ENCODE measurements at regions of chr6 and their contacts with region 1.

Region 1: DNA sequence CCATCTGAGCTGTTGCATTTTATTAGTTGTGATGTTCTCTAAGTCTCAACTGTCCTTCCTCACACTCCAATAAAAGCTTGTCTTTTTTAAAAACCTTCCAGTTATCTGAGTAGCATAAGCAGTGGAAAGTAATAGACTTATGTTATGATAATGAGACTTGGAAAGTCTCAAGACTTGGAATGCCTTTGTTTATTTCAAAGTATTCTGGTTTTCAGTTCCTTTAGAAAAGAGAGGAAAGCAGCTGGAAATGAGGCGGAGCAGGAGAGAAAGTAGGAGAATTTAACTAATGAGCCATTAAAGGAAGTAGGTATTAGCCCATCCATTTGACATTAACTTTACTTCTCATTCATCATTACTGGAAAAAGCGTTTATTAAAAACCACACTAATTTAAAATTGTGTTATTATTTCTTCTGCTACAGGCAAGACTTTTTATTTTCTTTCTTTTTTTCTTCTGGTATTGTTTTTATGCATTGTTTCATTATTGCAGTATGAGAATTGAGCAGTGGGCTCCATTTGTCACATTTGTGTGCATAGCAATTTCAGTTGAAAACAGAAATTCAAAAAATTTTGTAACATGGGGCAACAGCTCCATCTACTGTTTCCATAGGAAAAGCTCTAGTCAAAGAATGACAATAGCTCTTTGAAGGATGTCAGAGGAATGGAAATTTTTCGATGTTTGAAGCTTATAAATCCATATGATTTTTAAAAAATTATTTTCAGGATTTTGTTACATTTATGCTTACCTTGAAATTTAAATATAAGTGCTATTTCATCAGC is 194.8 kb downstream of the COL9A1 start:
- DNase-seq: peak; percentile 28
- H3K4me3 ChIP-seq: no peak overlapping the region; a peak in 1 of 4 replicates
- H3K27ac ChIP-seq: no peak overlapping the region
- H3K4me1 ChIP-seq: peaks cover 0 to 5% of the 10 kb centered on the region in 2 experiments; a peak in 1 of 4 replicates
- H3K27me3 ChIP-seq: no peaks in the 10 kb centered on the region
- CTCF ChIP-seq: peak; percentile 86
- EP300 ChIP-seq: no peak
- RAD21 ChIP-seq: peak; percentile 93

Region 2: DNA sequence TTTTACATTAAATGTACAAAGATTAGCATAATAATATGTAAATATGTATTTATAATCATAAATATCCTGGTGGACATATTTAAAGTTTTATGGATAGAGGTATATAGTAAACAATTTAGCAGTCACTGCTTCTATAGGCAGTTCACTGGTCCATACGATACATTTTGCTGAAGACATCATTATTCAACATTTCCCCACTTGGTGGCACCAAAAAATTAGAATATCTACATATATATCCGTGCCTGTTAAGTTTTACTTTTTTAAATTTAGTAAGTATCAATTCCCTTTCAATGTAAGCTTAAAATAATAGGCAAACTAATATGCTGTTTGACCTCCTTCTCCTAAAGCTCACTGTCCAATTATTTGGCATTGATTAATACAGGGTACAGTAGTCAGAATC is 375.4 kb before region 1 on chr6:
- CTCF ChIA-PET with region 1: interaction called, 43 read pairs
- POLR2A ChIA-PET with region 1: no interaction called
- DNase-seq: no peak
- H3K4me3 ChIP-seq: no peak overlapping the region
- H3K27ac ChIP-seq: no peak overlapping the region
- H3K4me1 ChIP-seq: no peaks in the 10 kb centered on the region
- H3K27me3 ChIP-seq: no peaks in the 10 kb centered on the region
- CTCF ChIP-seq: peak; percentile 50
- EP300 ChIP-seq: no peak
- RAD21 ChIP-seq: peak; percentile 56

Region 3: DNA sequence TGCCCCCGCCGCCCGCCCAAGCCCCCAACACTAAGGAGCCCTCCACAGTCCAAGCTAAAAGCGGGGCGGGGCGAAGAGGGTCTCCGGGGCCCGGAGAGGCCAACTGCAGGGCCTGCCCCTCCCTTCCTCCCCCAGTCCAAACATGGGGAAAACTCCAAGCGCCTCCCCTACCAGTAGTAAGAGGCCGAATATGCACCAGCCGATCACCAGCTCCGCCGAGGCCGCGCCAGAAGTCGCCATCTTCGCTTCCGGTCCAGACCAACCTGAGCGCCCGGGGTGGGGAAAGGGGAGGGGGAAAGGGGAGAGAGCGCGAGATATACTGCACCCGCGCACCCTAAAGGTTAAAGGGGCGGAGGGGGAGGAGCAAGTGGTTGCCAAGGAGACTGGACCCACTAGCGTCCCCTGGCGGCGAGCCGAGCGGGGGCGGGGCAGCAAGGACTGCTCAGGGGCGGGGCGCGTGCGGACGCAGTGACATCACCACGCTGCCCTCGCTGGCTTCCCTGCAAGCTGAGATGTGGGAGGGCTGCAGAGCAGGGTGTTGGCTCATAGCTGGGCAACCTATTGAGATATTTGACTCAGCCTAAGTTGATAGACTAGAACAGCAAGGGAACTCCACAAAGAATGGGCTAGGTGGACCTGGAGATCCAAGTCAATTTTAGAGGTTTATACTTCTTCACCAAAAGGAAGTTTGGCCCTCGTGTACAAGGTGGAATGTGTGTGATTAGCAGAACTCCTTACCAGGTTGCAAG is 311.2 kb before region 1 on chr6 and contains the start of gene LMBRD1:
- CTCF ChIA-PET with region 1: interaction called, 15 read pairs
- POLR2A ChIA-PET with region 1: no interaction called
- DNase-seq: peak; percentile 92
- H3K4me3 ChIP-seq: peak within 1 kb of the TSS; percentile 79 to 83
- H3K27ac ChIP-seq: peak within 1 kb of the TSS; percentile 38 to 77
- H3K4me1 ChIP-seq: peaks cover 4 to 5% of the 10 kb centered on the region in 2 experiments; a peak in 3 of 4 replicates
- H3K27me3 ChIP-seq: no peaks in the 10 kb centered on the region
- CTCF ChIP-seq: peak; percentile 83
- EP300 ChIP-seq: no peak
- RAD21 ChIP-seq: no peak
- polyA plus RNA-seq, gene LMBRD1: 6.5 and 7.8 TPM in 2 replicates

Region 4: GRCh38 chr6:69835414-69836179 is 272.4 kb before region 1 on chr6:
- CTCF ChIA-PET with region 1: interaction called, 36 read pairs
- POLR2A ChIA-PET with region 1: no interaction called
- DNase-seq: peak; percentile 24
- H3K4me3 ChIP-seq: peak overlapping the region; percentile 24 to 46; a peak in 3 of 4 replicates
- H3K27ac ChIP-seq: no peak overlapping the region
- H3K4me1 ChIP-seq: no peaks in the 10 kb centered on the region
- H3K27me3 ChIP-seq: no peaks in the 10 kb centered on the region
- CTCF ChIP-seq: peak; percentile 93
- EP300 ChIP-seq: no peak
- RAD21 ChIP-seq: peak; percentile 87

Region 5: GRCh38 chr6:69936674-69937363 is 171.2 kb before region 1 on chr6:
- CTCF ChIA-PET with region 1: no interaction called
- POLR2A ChIA-PET with region 1: no interaction called
- DNase-seq: no peak
- H3K4me3 ChIP-seq: no peak overlapping the region
- H3K27ac ChIP-seq: no peak overlapping the region
- H3K4me1 ChIP-seq: no peaks in the 10 kb centered on the region
- H3K27me3 ChIP-seq: no peaks in the 10 kb centered on the region
- CTCF ChIP-seq: no peak
- EP300 ChIP-seq: no peak
- RAD21 ChIP-seq: no peak

Region 6: GRCh38 chr6:70094156-70094555 is 13.9 kb before region 1 on chr6:
- CTCF ChIA-PET with region 1: interaction called, 20 read pairs
- POLR2A ChIA-PET with region 1: no interaction called
- DNase-seq: no peak
- H3K4me3 ChIP-seq: no peak overlapping the region
- H3K27ac ChIP-seq: no peak overlapping the region
- H3K4me1 ChIP-seq: no peaks in the 10 kb centered on the region
- H3K27me3 ChIP-seq: no peaks in the 10 kb centered on the region
- CTCF ChIP-seq: no peak
- EP300 ChIP-seq: no peak
- RAD21 ChIP-seq: no peak

Region 7: DNA sequence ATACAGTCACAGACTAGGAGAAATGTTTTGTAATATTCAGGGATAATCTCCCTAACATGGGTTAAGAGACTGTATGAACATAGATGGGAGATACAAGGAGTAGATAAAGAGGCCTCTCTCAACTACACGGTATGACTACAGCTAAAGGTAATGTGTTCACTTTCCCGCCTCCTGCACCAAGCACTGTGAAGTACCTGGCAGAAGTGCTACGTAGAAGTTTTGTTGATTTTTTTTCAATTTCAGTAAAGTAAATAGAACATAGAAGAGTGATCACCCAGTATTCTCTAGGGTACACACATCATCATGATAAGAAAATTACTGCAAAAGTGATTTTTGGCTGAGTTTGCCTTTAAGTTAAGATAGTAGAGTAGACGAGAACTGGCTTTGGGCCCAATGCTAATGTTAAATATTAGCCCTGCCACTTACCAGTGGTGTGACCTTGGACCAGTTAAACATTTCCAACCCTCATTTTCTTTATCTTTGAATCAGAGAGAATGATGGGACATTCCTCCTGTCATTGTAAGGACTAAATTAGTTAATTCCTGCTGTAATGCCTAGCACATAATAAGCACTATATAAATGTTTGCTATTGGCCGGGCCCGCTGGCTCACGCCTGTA is 11.3 kb after region 1 on chr6:
- CTCF ChIA-PET with region 1: interaction called, 25 read pairs
- POLR2A ChIA-PET with region 1: no interaction called
- DNase-seq: no peak
- H3K4me3 ChIP-seq: no peak overlapping the region
- H3K27ac ChIP-seq: no peak overlapping the region
- H3K4me1 ChIP-seq: no peaks in the 10 kb centered on the region
- H3K27me3 ChIP-seq: no peaks in the 10 kb centered on the region
- CTCF ChIP-seq: no peak
- EP300 ChIP-seq: no peak
- RAD21 ChIP-seq: no peak

Region 8: GRCh38 chr6:70124882-70125545 is 17.0 kb after region 1 on chr6:
- CTCF ChIA-PET with region 1: interaction called, 13 read pairs
- POLR2A ChIA-PET with region 1: no interaction called
- DNase-seq: no peak
- H3K4me3 ChIP-seq: no peak overlapping the region
- H3K27ac ChIP-seq: peak overlapping the region in 1 of 2 experiments; percentile 40; a peak in 1 of 4 replicates
- H3K4me1 ChIP-seq: no peaks in the 10 kb centered on the region
- H3K27me3 ChIP-seq: no peaks in the 10 kb centered on the region
- CTCF ChIP-seq: no peak
- EP300 ChIP-seq: no peak
- RAD21 ChIP-seq: no peak

Measured in SK-N-SH (cell line).